Activated CD4-positive, alpha-beta memory T cell treated with anti-CD3 and anti-CD28 coated beads for 36 hours (primary cell): ENCODE measurements at regions of chr2 and their contacts with region 1.

Region 1: DNA sequence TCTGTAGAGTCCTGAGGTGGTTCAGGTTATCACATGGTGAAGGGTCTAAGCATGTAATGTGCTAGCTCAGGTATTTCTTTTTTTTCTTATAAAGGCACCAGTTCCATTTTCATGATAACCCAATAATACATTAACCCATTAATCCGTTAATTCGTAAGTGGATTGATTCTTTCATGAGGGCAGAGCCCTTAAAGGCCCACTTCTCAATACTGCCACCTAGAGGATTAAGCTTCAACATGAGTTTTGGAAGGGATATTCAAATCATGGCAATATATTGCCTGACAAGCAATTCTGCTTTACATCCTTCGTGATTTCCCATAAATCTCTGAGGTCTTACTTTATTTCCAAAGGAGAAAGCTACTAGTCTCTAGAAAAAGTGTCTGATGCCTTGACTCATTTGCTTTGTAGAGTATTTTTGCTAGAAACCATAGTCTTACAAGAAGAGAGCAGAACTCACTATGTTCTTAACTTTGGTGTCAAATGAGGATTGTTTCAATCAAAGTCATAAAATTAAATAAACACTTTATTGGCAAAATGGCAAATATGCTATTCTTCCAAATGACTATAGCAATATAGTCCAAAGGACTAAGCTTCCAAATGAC is 271.3 kb downstream of the KCNS3 start:
- DNase-seq: no peak
- H3K4me3 Mint-ChIP-seq: no peak overlapping the region
- H3K27ac Mint-ChIP-seq: no peak overlapping the region
- H3K4me1 Mint-ChIP-seq: no peaks in the 10 kb centered on the region
- H3K27me3 Mint-ChIP-seq: no peaks in the 10 kb centered on the region

Region 2: DNA sequence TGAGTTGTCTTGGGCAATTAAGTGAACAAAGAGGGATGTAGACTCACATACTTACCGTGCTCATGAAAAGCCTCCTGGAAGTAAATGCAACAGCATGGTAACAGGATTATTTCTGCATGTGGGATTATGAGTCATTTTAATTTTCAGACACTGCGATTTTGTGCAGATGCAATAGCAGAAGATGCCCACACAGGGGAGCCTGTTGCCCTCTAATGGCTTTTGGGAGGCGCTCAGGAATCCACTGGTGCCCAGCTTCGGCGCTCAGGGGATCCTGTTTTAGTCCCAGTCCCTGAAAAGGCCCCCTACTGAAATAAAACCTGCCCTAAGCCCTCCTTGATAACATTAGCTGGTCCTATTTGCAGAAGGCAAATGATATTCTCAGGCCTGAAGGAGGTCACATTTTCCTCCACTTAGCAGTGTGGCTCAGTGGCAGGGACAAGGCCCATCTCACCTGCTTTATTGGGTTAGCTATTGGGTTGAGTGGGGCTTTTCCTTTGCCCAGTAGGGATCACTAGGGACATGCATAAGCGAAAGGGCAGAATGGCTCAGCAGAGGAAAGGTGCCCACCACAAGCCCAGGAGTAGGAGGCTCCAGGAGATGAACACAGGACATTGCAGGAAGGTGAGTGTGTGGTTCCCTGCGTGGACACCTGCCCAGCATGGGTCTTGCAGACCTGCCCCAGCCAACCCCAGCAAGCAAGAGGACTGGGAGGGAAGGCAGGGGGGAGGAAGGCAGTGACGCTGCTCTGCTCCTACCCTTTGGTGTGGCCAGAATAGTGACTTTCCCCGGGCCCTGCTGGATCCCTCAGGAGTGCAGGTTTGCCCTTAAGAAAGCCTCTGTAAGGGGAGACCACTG is 297.8 kb before region 1 on chr2:
- CTCF ChIA-PET with region 1: interaction called, 3 read pairs
- POLR2A ChIA-PET with region 1: no interaction called
- intact Hi-C with region 1: loop called (anchors 10 kb)
- DNase-seq: peak; percentile 42
- H3K4me3 Mint-ChIP-seq: no peak overlapping the region
- H3K27ac Mint-ChIP-seq: no peak overlapping the region
- H3K4me1 Mint-ChIP-seq: no peaks in the 10 kb centered on the region
- H3K27me3 Mint-ChIP-seq: peaks cover 16% of the 10 kb centered on the region

Region 3: DNA sequence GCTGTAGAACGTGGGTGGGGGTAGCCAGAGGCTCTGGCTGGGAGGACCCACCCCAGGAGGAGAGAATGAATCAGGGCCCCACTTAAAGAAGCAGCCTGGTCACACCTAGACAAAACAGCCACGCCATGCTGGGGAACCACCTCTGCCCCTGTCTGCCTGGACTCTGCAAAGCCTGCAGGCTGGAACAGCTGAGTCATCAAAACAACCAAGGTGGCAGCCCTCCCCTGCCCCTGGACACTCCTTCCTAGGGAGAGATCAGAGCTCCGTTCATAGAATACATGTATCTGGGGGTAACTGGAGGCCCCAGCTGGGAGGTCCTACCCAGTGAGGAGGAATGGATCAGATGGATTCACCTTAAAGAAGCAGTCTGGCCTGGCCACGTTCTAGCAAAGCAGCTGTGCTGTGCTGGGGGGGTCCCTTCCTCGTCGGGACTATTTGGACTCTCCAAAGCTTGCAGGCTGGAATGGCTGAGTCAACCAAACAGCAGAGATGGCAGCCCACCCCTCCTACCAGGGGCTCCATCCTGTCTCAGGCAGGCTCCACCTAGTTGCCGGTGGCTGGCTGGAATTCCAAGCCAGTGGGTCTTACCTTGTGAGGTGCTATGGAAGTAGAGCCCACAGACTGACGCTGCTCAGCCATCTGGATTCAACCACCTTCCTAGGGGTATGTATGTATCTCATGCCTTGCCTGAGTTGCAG is 490.2 kb after region 1 on chr2:
- CTCF ChIA-PET with region 1: no interaction called
- POLR2A ChIA-PET with region 1: no interaction called
- intact Hi-C with region 1: no loop called
- DNase-seq: no peak
- H3K4me3 Mint-ChIP-seq: no peak overlapping the region
- H3K27ac Mint-ChIP-seq: no peak overlapping the region
- H3K4me1 Mint-ChIP-seq: no peaks in the 10 kb centered on the region
- H3K27me3 Mint-ChIP-seq: no peaks in the 10 kb centered on the region

Region 4: DNA sequence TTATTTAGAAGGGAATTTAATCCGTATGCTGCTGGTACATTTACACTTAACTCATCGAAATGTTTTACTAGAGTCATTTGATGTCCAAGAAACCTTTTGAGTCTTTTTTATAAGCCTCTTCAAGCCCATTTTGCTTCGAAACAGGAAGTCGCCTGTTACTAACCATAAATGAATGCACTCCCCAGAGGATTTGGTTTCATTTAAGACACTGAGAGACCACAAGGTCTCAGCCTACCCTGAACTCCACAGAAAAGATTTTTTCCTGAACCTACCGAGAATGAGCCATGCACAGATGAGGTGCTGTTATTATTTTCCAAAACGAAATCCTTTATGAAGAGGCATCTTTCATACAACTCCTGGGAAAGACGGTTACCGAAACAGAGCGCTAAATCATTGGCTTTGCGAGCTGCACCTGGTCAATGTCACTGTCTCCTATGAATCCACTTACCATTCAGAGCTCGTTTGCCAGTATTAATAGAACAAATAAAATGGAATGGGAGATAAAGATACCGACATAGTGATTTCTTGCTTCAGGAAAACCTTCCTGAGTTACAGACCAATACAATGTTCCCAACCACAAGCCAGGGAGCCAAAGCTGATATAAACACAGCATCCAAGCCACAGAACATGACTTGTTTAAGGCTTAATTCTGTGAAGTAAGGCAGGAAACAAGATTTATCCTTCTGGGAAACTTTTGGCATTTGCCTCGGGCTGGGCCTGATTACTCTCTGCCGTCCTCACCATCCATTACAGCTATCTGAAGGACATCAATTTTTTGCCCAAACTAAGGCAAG is 826.6 kb after region 1 on chr2:
- CTCF ChIA-PET with region 1: no interaction called
- POLR2A ChIA-PET with region 1: no interaction called
- intact Hi-C with region 1: no loop called
- DNase-seq: no peak
- H3K4me3 Mint-ChIP-seq: no peak overlapping the region
- H3K27ac Mint-ChIP-seq: no peak overlapping the region
- H3K4me1 Mint-ChIP-seq: no peaks in the 10 kb centered on the region
- H3K27me3 Mint-ChIP-seq: no peaks in the 10 kb centered on the region